ENCODE measurements at regions of chr2 and their contacts with region 1.

Region 1: GRCh38 chr2:19228715-19229114 is 129.7 kb downstream of the OSR1 start:
- DNase-seq: peak in 1 of 2 donors; percentile 71
- H3K4me3 ChIP-seq: no peak overlapping the region
- H3K27ac ChIP-seq: peak overlapping the region in 1 of 2 donors; percentile 29
- H3K4me1 ChIP-seq: no peaks in the 10 kb centered on the region
- H3K27me3 ChIP-seq: no peaks in the 10 kb centered on the region
- CTCF ChIP-seq: no peak
- POLR2A ChIP-seq: no peak

Region 2: GRCh38 chr2:19454125-19454524 is 225.4 kb after region 1 on chr2:
- intact Hi-C with region 1: loop called (anchors 5 kb)
- DNase-seq: no peak
- H3K4me3 ChIP-seq: no peak overlapping the region
- H3K27ac ChIP-seq: no peak overlapping the region
- H3K4me1 ChIP-seq: no peaks in the 10 kb centered on the region
- H3K27me3 ChIP-seq: no peaks in the 10 kb centered on the region
- CTCF ChIP-seq: no peak
- POLR2A ChIP-seq: no peak

Region 3: DNA sequence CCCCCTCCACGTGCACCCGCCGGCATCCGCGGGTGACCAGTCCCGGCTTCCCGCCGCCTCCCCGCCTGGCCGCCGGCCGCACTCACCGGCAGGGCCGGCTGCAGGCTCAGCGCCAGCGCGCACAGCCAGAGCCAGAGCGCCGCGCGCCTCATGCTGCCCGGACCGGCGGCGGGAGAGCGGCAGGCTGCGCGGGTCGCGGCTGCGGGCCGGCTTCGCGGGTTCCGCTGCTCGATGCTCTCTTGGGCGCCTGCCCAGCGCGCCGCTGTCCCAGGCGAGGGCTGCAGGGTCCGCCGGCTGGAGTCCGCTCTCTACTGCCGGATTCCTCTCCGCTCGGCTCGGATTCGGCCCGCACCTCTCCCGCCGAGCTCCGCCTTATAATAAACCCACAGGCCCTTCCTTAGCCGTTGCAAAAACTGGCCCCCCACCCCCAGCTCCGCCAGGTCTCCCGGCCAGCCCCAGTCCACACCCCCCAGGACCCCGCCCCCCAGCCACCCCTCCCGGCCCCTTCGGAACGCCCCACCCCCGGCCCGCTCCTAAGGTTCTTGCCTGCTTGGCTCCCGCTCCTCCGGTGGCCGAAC is 996.1 kb after region 1 on chr2 and contains the start of gene SDC1:
- intact Hi-C with region 1: loop called (anchors 5 kb)
- DNase-seq: peak; percentile 52 to 56
- H3K4me3 ChIP-seq: peak within 1 kb of the TSS; percentile 50 to 96 (median 77)
- H3K27ac ChIP-seq: peak within 1 kb of the TSS; percentile 94 to 95
- H3K4me1 ChIP-seq: peaks cover 6 to 18% of the 10 kb centered on the region in 2 donors
- H3K27me3 ChIP-seq: no peaks in the 10 kb centered on the region
- CTCF ChIP-seq: no peak
- POLR2A ChIP-seq: no peak
- total RNA-seq, gene SDC1: 2.6 to 51.8 (median 38.7) TPM